Ascending aorta (tissue), 2 donors: ENCODE measurements at regions of chr7 and their contacts with region 1.

Region 1: DNA sequence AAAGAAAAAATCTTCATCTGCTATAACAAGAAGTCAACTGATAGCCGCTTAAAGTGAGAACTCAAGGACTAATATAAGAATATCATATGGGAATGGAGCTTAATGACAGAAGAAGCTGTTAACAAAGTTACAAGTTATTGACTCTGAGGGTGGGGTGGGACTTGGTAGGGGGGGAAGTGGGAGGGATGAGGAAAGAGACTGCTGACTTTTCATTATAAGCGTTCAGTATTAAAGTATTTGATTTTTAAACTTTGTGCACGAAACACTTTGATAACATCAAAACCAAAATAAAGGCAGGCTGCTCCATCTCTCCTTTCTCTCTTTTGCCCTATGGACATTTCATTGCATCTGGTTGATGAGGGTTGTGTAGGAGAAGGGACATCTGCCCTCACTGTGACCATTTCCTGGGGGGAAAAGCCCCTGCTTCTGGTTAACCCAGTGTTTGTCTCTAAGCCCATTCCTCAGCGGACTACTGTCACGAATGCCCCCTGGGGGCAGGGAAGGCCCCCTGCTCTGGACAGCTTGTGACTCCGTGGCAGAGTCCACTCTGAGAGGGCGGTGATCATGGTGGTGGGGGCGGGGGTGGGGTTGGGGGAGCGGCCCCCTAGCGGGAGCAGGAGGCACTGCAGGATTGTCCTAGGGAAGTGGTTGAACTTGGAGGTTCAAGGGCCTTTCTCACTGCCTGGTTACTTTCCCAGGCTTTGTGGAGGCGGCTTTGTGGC is 17.4 kb downstream of the SLC13A4 start:
- DNase-seq: no peak
- H3K4me3 ChIP-seq: peak overlapping the region; percentile 33 to 49
- H3K27ac ChIP-seq: peak overlapping the region; percentile 55 to 71
- H3K4me1 ChIP-seq: peaks cover 6 to 36% of the 10 kb centered on the region in 2 donors
- H3K27me3 ChIP-seq: no peaks in the 10 kb centered on the region
- CTCF ChIP-seq: peak in 2 of 3 experiments; percentile 78 to 81

Region 2: DNA sequence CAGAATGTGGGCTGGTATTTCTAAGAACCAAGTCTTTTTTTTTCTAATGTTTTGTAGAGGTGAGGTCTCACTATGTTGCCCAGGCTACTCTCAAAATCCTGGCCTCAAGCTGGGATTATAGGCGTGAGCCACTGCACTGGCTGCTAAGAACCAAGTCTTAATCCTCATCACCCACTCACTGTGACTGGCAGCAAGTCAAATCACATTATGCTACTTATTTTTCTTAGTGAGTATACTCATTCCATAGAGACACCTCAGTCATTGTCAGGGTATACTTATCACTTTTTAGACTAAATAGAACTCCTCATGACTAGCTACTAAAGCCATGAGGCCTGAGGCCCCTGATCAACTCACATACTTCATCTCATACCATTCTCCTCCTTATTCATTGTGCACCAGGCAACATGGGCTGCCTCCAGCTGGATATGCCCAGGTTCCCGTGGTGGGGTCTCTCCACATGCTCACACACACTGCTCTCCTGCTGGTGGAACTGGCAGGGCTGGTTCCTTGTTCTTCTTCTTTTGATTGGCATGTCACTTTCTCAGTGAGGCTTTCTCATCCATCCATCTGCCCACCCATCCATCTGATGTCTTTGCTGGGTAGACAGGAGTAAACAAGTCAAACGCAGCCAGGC is 360.7 kb before region 1 on chr7:
- intact Hi-C with region 1: no loop called
- DNase-seq: no peak
- H3K4me3 ChIP-seq: no peak overlapping the region
- H3K27ac ChIP-seq: no peak overlapping the region
- H3K4me1 ChIP-seq: no peaks in the 10 kb centered on the region
- H3K27me3 ChIP-seq: no peaks in the 10 kb centered on the region
- CTCF ChIP-seq: no peak

Region 3: DNA sequence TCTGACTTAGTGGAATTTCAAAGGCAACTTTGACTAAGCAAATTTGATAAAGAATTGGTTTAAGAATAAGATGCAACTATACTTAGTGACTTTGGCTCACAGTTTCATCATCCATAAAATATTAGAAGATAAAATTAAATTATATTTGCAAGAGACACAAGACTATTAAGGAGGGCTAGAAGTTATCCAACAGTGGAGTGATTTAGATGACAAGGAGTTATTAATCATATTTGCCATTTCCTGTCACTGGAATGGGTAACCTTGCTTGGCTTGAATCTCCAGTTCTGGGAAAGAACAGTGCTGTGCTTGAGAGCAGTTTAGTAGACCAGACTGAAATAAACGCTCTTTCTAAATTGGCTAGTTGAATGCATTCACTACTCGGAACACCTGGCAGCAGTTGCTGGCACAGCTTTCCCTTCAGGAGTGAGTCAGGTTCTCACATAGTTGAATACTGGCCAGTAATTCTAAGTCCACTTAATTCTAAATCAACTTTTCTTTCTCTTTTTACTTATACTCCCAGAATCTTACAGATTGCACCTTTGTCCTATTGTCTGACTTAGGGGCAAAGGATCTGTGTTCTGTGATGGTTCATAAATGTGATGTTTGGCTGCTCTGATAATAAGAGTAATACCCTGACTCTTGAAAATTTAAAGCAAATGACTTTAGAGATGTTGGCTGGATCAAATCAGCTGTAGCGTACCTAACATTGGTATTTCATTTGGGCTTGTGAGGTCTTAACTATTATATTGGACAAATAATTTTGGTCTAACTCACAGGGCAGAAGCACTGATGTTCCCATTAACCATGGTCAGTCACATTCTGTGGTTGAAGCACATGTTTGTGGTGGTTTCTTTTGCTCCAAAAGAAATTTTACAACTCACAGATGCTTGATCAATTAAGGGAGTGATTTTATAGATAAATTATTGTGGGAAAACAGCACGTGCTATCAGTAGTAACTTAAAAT is 31.7 kb before region 1 on chr7:
- intact Hi-C with region 1: loop called (anchors 2 kb)
- DNase-seq: peak; percentile 30 to 85
- H3K4me3 ChIP-seq: no peak overlapping the region
- H3K27ac ChIP-seq: peak overlapping the region; percentile 48 to 56
- H3K4me1 ChIP-seq: peaks cover 2 to 33% of the 10 kb centered on the region in 2 donors
- H3K27me3 ChIP-seq: no peaks in the 10 kb centered on the region
- CTCF ChIP-seq: no peak

Region 4: GRCh38 chr7:135795846-135796570 is 85.4 kb after region 1 on chr7:
- intact Hi-C with region 1: loop called (anchors 10 kb)
- DNase-seq: no peak
- H3K4me3 ChIP-seq: no peak overlapping the region
- H3K27ac ChIP-seq: peak overlapping the region; percentile 81 to 87
- H3K4me1 ChIP-seq: peaks cover 7 to 28% of the 10 kb centered on the region in 2 donors
- H3K27me3 ChIP-seq: no peaks in the 10 kb centered on the region
- CTCF ChIP-seq: no peak